ENCODE measurements at regions of chr1 and their contacts with region 1.

Region 1: GRCh38 chr1:77978969-77979876 is at the start of gene FUBP1:
- DNase-seq: peak; percentile 91 to 99 (median 93)
- ATAC-seq: peak; percentile 75
- H3K4me3 ChIP-seq: peak within 1 kb of the TSS; percentile 82
- H3K4me3 Mint-ChIP-seq: no peak within 1 kb of the TSS
- H3K27ac ChIP-seq: peak within 1 kb of the TSS; percentile 99
- H3K27ac Mint-ChIP-seq: no peak within 1 kb of the TSS
- H3K4me1 ChIP-seq: peaks cover 33% of the 10 kb centered on the region
- H3K4me1 Mint-ChIP-seq: peaks cover 44% of the 10 kb centered on the region
- H3K27me3 ChIP-seq: no peaks in the 10 kb centered on the region
- H3K27me3 Mint-ChIP-seq: no peaks in the 10 kb centered on the region
- CTCF ChIP-seq: peak; percentile 70
- total RNA-seq, gene FUBP1: 196 to 202 TPM

Region 2: GRCh38 chr1:77594366-77595112 is 384.7 kb before region 1 on chr1:
- CTCF ChIA-PET with region 1: no interaction called
- POLR2A ChIA-PET with region 1: no interaction called
- intact Hi-C with region 1: no loop called
- DNase-seq: no peak
- ATAC-seq: no peak
- H3K4me3 ChIP-seq: no peak overlapping the region
- H3K4me3 Mint-ChIP-seq: no peak overlapping the region
- H3K27ac ChIP-seq: no peak overlapping the region
- H3K27ac Mint-ChIP-seq: peak overlapping the region; percentile 3
- H3K4me1 ChIP-seq: no peaks in the 10 kb centered on the region
- H3K4me1 Mint-ChIP-seq: peaks cover 39% of the 10 kb centered on the region
- H3K27me3 ChIP-seq: no peaks in the 10 kb centered on the region
- H3K27me3 Mint-ChIP-seq: no peaks in the 10 kb centered on the region
- CTCF ChIP-seq: no peak

Region 3: DNA sequence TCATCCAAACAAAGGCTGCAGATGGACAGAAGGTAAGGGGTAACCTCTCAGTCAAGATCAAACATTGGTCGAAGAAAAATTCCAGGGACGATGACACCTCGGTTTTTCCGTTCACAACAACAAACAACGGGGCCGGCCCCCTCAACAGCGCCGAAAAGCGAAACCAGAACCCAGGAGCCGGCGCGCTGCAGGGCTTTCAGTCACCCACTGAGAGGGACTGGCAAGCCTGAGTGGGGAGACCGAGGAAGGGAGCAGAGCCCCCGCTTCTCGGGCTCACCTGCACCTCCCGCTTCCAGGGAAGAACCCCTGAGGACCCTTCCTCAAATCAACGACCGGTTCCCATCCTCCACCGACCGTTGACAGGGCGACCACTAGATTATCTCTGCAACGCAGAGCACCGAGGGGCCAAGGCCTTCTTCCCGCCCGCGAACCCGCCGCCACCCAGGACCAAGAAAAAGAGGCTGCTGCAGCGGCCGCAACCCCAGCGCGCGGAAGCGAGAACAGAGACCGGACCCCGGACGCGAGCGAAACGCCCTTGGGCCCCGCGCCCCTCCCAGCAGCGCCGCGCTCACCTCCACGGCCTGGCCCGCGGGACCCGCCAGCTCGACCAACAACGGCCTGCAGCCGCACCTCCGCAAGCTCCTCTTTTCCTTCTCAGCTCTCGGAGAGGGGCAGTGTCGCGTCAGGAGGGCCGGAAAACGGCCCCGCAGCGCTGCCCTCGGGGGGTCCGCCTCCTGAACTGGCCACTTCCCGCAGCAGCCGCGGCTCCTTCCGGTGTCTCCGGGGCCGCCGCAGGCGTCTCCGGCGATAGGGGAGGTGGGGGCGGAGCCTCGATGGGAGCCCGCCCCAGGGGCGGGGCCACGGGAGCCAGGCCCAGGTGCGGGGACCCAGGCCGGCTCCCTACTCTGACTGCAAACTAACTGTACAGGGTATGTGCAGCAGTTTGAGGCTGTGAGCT is 219.9 kb before region 1 on chr1 and contains the start of gene USP33:
- CTCF ChIA-PET with region 1: no interaction called
- POLR2A ChIA-PET with region 1: interaction called, 16 read pairs
- intact Hi-C with region 1: loop called in 1 of 2 experiments (anchors 5 kb)
- DNase-seq: peak; percentile 86 to 97 (median 92)
- ATAC-seq: peak; percentile 95
- H3K4me3 ChIP-seq: peak within 1 kb of the TSS; percentile 80
- H3K4me3 Mint-ChIP-seq: peak within 1 kb of the TSS; percentile 90
- H3K27ac ChIP-seq: peak within 1 kb of the TSS; percentile 29 to 88
- H3K27ac Mint-ChIP-seq: peak within 1 kb of the TSS; percentile 87
- H3K4me1 ChIP-seq: peaks cover 23% of the 10 kb centered on the region
- H3K4me1 Mint-ChIP-seq: peaks cover 57% of the 10 kb centered on the region
- H3K27me3 ChIP-seq: no peaks in the 10 kb centered on the region
- H3K27me3 Mint-ChIP-seq: no peaks in the 10 kb centered on the region
- CTCF ChIP-seq: no peak
- total RNA-seq, gene USP33: 69.7 to 71.6 TPM

Region 4: DNA sequence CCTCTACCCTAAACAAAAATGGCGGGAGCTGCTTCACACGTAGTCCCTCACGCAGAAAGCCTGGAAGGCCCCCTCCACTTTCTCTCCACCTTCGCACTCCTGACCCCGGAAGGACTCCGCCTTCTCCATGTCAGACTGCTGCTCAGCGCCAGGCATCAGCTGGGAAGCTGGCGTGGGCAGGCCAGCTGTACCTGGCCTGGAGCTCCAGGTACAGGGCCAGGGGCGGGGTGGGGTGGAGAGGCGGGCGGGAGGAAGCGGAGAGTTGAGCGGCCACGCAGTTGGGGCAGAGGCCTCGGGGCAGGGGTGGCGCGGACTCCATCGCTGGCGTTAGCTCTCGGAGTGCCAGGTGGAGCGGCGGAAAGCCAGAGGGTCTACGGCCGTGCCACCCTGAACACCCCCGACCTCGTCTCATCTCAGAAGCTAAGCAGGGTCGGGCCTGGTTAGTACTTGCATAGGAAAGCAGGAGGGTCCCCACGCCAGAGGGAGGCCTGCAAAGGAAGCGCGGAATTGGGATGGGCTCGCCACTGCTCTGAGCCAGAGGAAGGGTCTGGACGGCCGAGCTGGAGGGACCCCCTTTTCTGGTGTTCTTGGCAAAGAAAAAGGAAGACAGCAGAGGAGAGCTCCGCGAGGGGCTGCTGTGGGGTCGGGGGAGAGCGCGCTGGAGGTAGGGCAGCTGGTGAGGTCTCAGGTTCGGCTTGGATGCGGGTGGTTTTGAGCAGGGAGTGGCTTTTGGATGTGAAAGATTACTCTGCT is 199.5 kb before region 1 on chr1 and contains the start of gene MIGA1:
- CTCF ChIA-PET with region 1: no interaction called
- POLR2A ChIA-PET with region 1: interaction called, 23 read pairs
- intact Hi-C with region 1: loop called in 1 of 2 experiments (anchors 5 kb)
- DNase-seq: peak; percentile 78 to 96 (median 84)
- ATAC-seq: peak; percentile 98
- H3K4me3 ChIP-seq: peak within 1 kb of the TSS; percentile 96
- H3K4me3 Mint-ChIP-seq: peak within 1 kb of the TSS; percentile 97
- H3K27ac ChIP-seq: peak within 1 kb of the TSS; percentile 32 to 55
- H3K27ac Mint-ChIP-seq: peak within 1 kb of the TSS; percentile 89
- H3K4me1 ChIP-seq: peaks cover 14% of the 10 kb centered on the region
- H3K4me1 Mint-ChIP-seq: peaks cover 43% of the 10 kb centered on the region
- H3K27me3 ChIP-seq: no peaks in the 10 kb centered on the region
- H3K27me3 Mint-ChIP-seq: no peaks in the 10 kb centered on the region
- CTCF ChIP-seq: no peak
- total RNA-seq, gene MIGA1: 12.2 to 15.8 TPM

Region 5: DNA sequence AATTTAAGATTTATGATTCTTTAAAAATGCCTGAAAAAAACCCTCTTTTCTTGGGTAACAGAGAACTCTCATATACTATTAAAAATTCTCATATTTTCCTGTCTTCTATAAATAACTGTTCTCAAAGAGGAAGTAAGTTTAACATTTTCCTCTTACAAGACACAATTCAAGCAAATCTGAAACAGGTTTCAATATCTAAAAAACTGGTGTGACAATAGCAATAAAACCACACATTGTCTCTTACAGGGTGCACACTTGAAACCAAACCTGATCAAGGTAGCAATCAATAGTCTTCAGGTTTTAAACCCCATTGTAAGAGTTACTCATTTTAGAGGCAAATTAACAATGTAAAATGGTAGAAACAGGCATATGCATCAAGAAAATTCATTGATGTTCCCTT is 28.4 kb before region 1 on chr1:
- CTCF ChIA-PET with region 1: interaction called, 3 read pairs
- POLR2A ChIA-PET with region 1: interaction called, 17 read pairs
- intact Hi-C with region 1: no loop called
- DNase-seq: no peak
- ATAC-seq: no peak
- H3K4me3 ChIP-seq: no peak overlapping the region
- H3K4me3 Mint-ChIP-seq: no peak overlapping the region
- H3K27ac ChIP-seq: no peak overlapping the region
- H3K27ac Mint-ChIP-seq: peak overlapping the region; percentile 18
- H3K4me1 ChIP-seq: no peaks in the 10 kb centered on the region
- H3K4me1 Mint-ChIP-seq: peaks cover 30% of the 10 kb centered on the region
- H3K27me3 ChIP-seq: no peaks in the 10 kb centered on the region
- H3K27me3 Mint-ChIP-seq: no peaks in the 10 kb centered on the region
- CTCF ChIP-seq: no peak

Region 6: DNA sequence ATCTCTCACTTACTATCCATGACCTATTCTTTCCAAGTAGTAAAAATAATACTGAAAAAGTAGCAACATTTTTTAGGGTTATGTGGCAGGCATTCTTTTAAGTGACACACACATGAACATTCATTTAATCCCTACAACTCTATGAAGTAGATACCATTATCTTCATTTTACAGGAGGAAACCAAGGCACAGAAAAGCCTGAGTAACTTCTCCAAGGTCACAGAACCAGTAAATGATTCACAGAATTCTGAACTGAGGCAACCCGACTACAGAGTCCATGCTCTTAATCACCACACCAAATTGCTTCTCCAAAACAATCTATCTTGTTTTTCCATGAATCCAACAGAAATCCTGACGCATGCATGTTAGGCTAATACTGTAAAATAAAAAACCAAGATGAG is 17.8 kb before region 1 on chr1:
- CTCF ChIA-PET with region 1: interaction called, 3 read pairs
- POLR2A ChIA-PET with region 1: interaction called, 67 read pairs
- intact Hi-C with region 1: loop called in 1 of 2 experiments (anchors 2 kb)
- DNase-seq: no peak
- ATAC-seq: no peak
- H3K4me3 ChIP-seq: no peak overlapping the region
- H3K4me3 Mint-ChIP-seq: no peak overlapping the region
- H3K27ac ChIP-seq: no peak overlapping the region
- H3K27ac Mint-ChIP-seq: no peak overlapping the region
- H3K4me1 ChIP-seq: no peaks in the 10 kb centered on the region
- H3K4me1 Mint-ChIP-seq: peaks cover 34% of the 10 kb centered on the region
- H3K27me3 ChIP-seq: no peaks in the 10 kb centered on the region
- H3K27me3 Mint-ChIP-seq: no peaks in the 10 kb centered on the region
- CTCF ChIP-seq: no peak

Region 7: DNA sequence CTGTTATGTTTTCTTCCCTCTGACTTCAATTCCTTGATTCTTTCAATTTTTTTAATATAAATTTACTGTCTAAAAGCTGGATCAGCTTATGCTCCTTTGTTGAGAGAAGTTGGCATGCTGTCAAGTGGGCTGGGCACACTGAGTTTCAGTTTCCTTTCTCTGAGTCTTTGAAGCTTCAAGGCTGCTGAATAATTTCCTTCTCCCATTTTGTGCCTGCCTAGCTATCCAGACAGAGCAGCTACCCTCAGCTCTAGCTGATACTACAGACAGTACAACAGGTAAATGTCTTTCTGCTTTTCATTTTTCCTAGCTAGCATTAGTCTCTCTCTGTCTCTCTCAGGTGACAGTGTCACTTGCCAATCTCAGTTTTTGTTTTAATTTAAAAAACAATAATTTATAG is 670.4 kb after region 1 on chr1 and contains the start of gene IFI44:
- CTCF ChIA-PET with region 1: no interaction called
- POLR2A ChIA-PET with region 1: interaction called, 13 read pairs
- intact Hi-C with region 1: no loop called
- DNase-seq: peak; percentile 59 to 90 (median 73)
- ATAC-seq: peak; percentile 81
- H3K4me3 ChIP-seq: peak within 1 kb of the TSS; percentile 65
- H3K4me3 Mint-ChIP-seq: peak within 1 kb of the TSS; percentile 92
- H3K27ac ChIP-seq: peak within 1 kb of the TSS; percentile 30 to 55
- H3K27ac Mint-ChIP-seq: peak within 1 kb of the TSS; percentile 80
- H3K4me1 ChIP-seq: peaks cover 30% of the 10 kb centered on the region
- H3K4me1 Mint-ChIP-seq: peaks cover 81% of the 10 kb centered on the region
- H3K27me3 ChIP-seq: no peaks in the 10 kb centered on the region
- H3K27me3 Mint-ChIP-seq: no peaks in the 10 kb centered on the region
- CTCF ChIP-seq: no peak
- total RNA-seq, gene IFI44: 67.4 to 70.0 TPM